T-cell (primary cell): ENCODE measurements at regions of chr2 and their contacts with region 1.

Region 1: DNA sequence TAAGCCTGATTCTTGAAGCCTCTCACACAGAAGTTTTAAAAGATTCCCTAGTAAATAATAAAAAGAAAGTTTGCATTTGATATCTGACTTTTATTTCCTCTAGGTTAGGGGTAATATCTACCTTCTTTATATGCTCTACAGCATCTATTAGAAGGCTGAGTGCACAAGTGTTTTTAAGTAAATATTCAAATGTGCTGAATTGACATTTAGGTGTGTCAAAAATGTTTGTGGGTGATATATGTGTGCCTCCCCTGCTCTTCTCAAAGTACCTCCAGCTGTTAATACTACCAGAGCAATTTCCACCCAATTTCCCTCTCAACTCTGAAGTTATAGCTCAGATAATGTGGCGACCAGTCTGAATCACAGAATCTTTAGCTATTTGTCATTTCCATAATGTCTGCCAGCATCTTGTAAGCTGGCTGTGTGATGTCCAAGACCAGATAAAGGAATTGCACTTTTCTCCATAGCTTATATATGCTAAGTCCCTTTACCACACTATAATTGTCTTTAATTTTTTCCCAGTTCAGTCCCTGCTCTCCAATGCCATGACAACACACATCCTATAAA is 24.4 kb upstream of the ERMN start:
- DNase-seq: no peak
- ATAC-seq: no peak
- H3K4me3 ChIP-seq: no peak overlapping the region
- H3K4me3 Mint-ChIP-seq: no peak overlapping the region
- H3K27ac ChIP-seq: no peak overlapping the region
- H3K27ac Mint-ChIP-seq: no peak overlapping the region
- H3K4me1 ChIP-seq: peaks cover 0 to 10% of the 10 kb centered on the region in 2 experiments
- H3K4me1 Mint-ChIP-seq: peaks cover 55 to 68% (median 57%) of the 10 kb centered on the region in 3 donors
- H3K27me3 ChIP-seq: no peaks in the 10 kb centered on the region
- H3K27me3 Mint-ChIP-seq: no peaks in the 10 kb centered on the region

Region 2: DNA sequence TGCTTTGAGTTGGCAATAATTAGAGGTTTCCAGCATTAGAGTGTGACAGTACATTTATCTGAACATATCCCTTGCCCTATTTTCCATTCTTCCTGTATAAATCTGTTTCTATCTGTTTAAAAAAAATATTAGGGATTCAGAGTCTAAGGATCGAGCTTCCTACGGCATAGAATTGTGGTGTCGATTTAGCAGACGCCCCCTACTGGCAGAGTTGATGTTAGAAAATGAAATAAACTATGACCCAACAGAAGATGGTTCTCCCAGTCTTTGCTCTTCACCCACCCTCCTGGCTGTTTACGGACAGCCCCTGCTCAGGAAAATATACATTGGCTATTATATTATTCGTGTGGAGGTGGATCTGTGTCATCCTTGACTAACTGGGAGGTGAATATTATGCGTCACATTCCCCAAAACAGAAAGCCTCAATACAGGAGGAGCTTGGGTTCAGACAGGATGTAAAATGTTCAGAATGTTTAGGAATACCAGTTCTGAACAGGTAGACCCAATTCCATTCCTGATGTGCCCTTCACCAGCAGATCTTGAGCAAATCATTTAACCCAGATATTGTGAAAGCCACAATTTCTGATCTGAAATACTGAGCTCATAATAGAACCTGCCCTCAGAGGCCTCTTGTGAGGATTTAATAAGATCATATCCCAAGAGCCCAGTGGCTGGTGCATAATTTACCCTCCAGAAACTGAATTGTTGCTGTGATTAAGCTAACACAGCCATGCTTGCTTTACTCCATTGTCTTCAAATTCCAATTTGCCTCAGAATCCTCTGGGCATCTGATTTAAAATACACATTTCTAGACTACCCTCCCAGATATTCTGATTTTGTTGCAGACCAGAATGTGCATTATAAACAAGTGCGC is 13.7 kb before region 1 on chr2:
- CTCF ChIA-PET with region 1: interaction called, 21 to 22 read pairs
- POLR2A ChIA-PET with region 1: interaction called in 1 of 2 experiments, 3 read pairs
- DNase-seq: peak in 24 of 35 experiments; percentile 1 to 75 (median 32)
- ATAC-seq: no peak
- H3K4me3 ChIP-seq: no peak overlapping the region
- H3K4me3 Mint-ChIP-seq: peak overlapping the region; percentile 50 to 67 (median 60)
- H3K27ac ChIP-seq: no peak overlapping the region
- H3K27ac Mint-ChIP-seq: peak overlapping the region; percentile 78 to 88
- H3K4me1 ChIP-seq: peaks cover 16 to 17% of the 10 kb centered on the region in 2 experiments
- H3K4me1 Mint-ChIP-seq: peaks cover 78 to 89% (median 79%) of the 10 kb centered on the region in 3 donors
- H3K27me3 ChIP-seq: no peaks in the 10 kb centered on the region
- H3K27me3 Mint-ChIP-seq: no peaks in the 10 kb centered on the region

Region 3: DNA sequence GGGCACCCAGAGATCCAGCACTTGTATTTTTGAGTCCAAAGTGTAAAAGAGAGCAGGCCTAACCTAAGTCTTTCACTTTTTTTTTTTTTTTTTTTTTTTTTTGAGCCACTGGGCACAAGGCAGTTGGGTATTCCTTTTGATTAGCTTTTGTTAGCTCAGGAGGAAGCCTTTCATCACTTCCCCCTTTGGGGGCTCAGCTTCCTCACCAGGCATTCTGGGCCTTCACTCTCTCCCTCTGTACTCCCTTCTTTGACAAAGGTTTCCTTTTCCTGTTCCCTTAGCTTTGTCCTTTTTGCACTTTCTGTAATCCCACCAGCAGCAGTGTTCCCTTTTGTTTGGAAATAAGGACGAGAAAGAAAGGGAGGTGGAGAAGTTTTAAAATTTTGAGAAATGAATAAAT is 1195.0 kb after region 1 on chr2:
- CTCF ChIA-PET with region 1: interaction called in 1 of 2 experiments, 10 read pairs
- POLR2A ChIA-PET with region 1: no interaction called
- DNase-seq: no peak
- ATAC-seq: no peak
- H3K4me3 ChIP-seq: no peak overlapping the region
- H3K4me3 Mint-ChIP-seq: no peak overlapping the region
- H3K27ac ChIP-seq: no peak overlapping the region
- H3K27ac Mint-ChIP-seq: no peak overlapping the region
- H3K4me1 ChIP-seq: peaks cover 0 to 4% of the 10 kb centered on the region in 2 experiments
- H3K4me1 Mint-ChIP-seq: peaks cover 13 to 27% (median 13%) of the 10 kb centered on the region in 3 donors
- H3K27me3 ChIP-seq: no peaks in the 10 kb centered on the region
- H3K27me3 Mint-ChIP-seq: no peaks in the 10 kb centered on the region